Activated T-helper 1 cell treated with anti-CD3 and anti-CD28 coated beads, Interleukin-12 subunit alpha, Interleukin-12 subunit beta, Interleukin-2, Interleukin-4 antibody, amounts not matched to agents 30 ng/mL and 10 ng/mL and 1 ng/mL, durations not matched to agents 14 hours and 24 hours and 36 hours (primary cell): ENCODE measurements at regions of chr4 and their contacts with region 1.

Region 1: DNA sequence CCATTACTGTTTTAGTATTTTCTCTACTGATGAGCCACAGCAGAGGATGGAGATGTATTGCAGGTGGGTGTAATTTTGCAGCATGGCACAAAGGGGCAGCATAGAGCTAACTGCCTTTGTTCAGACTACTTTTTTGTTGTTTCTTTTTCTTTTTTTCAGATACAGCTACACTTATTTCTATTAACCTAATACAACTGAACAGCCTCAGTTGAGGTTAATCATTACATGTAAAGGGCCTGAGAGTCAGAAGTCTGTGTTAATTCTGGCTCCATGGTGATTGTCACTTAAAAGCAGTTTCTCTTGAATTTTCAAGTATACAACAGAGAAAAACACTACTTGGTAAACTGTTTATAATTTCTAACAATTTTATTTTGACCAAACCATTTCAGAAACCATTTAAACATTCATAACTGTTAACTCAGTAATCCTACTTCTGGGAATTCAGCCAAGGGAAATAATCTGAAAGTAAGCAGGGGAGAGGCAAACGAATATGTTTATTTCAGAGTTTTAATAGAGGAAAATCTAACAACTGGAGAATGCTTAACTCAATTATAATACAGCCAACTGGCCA is 13.9 kb upstream of the PPEF2 start:
- DNase-seq: peak; percentile 11
- H3K4me3 Mint-ChIP-seq: no peak overlapping the region
- H3K27ac Mint-ChIP-seq: no peak overlapping the region
- H3K4me1 Mint-ChIP-seq: peaks cover 4% of the 10 kb centered on the region
- H3K27me3 Mint-ChIP-seq: no peaks in the 10 kb centered on the region

Region 2: GRCh38 chr4:76087007-76087769 is 171.0 kb after region 1 on chr4:
- intact Hi-C with region 1: loop called (anchors 5 kb)
- DNase-seq: no peak
- H3K4me3 Mint-ChIP-seq: no peak overlapping the region
- H3K27ac Mint-ChIP-seq: no peak overlapping the region
- H3K4me1 Mint-ChIP-seq: peaks cover 5% of the 10 kb centered on the region
- H3K27me3 Mint-ChIP-seq: peaks cover 4% of the 10 kb centered on the region